Aorta (tissue), 5 donors: ENCODE measurements at regions of chr3 and their contacts with region 1.

Region 1: DNA sequence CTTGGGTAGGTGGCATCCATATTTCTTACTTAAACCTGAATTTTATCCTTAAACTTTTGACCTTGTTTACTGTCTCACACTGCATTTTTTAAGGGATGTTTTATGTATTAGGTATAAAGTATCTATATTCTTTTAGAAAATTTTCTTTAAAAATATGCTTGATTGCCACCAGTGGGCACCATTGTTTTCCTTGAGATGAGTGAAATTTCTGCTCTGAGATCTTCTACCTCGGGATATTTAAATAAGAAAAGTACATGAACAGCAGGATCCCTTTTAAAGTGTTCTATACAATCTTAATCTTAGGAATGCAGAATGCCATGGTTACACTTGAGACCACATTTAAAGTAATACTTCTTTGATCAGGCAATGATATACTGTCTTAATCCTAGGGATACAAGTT is 108.7 kb downstream of the SLMAP start:
- DNase-seq: no peak
- ATAC-seq: no peak
- H3K4me3 ChIP-seq: no peak overlapping the region
- H3K27ac ChIP-seq: no peak overlapping the region
- H3K4me1 ChIP-seq: no peaks in the 10 kb centered on the region
- H3K27me3 ChIP-seq: no peaks in the 10 kb centered on the region

Region 2: DNA sequence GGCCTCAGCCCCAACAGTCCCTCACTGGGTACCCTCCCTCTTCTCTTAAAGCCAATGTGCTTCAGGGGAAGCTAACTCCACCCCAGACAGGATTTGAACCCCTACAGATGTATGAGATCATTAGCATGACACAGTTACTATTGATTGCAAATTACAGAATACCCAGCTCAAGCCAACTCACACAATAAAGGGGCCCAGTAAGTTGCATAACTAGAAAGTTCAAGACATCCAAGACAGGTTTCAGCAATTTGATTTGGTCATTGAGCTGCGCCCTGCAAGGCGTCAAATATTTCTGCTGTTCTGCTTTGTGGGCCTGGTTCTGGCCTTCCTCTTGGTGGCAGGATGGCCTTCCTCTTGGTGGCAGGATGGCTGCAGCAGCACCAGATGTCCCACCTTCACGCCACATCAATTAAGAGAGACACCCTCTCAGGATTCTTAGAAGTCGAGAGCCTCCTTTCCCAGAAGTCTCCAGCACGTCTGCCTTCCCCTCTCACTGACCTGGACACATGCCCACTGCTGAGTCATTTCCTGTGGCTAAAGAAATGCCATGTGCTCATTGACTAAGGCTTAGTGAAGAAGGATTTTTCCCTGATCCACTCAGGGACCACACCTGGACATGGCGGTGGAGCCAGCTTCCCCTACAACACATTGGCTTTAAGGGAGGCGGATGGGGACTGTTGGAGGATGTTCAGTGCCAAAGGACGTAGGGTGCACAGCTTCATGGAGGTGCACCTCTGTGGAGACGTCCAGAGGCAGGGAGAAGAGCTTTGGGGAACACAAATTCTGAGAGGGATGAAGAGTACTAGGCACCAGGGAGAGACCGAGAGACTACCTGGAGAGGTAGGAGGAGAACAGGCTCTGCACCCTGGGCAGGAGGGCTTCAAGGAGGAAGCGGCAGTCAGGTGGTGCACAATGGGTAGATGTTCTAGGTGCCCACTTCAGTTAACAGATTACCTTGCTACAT is 296.9 kb after region 1 on chr3:
- intact Hi-C with region 1: loop called in 1 of 2 experiments (anchors 5 kb)
- DNase-seq: peak; percentile 92
- ATAC-seq: peak; percentile 61
- H3K4me3 ChIP-seq: no peak overlapping the region
- H3K27ac ChIP-seq: peak overlapping the region in 1 of 2 donors; percentile 67
- H3K4me1 ChIP-seq: peaks cover 0 to 6% of the 10 kb centered on the region in 2 donors
- H3K27me3 ChIP-seq: no peaks in the 10 kb centered on the region